GM18951 (cell line): ENCODE measurements at regions of chr6 and their contacts with region 1.

Region 1: GRCh38 chr6:82270881-82271645 is 23.5 kb upstream of the IBTK start:
- POLR2A ChIP-seq: no peak

Region 2: DNA sequence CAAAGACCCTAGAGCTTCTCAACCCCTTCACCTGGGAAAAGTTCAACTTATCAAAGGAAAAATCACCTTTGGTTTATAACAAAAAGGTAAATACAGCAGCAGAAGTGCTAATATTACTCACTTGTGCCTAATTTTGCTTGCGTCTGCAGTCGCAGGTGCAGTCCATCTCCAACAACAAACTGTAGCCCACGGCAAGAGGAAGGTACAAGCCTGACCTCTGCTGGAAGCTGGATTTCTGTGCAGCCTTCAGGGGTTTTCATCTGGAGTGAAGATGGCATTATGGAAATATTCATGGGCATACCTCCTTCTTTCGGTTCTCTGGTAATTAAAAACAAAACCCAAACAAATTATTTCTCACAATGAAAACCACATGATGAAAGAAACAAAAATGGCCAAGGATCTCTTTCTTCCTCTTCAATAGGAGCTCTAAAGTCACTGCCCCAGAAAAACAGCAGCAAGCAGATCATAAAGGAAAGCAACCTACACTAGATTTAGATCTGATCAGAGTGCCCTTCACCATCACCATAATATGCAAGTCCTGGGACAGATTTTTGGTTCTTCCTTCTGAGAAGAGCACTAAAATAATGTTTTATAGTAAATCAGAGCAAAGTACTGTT is 786.8 kb after region 1 on chr6:
- in situ Hi-C with region 1: loop called (anchors 10 kb)
- POLR2A ChIP-seq: no peak

Region 3: DNA sequence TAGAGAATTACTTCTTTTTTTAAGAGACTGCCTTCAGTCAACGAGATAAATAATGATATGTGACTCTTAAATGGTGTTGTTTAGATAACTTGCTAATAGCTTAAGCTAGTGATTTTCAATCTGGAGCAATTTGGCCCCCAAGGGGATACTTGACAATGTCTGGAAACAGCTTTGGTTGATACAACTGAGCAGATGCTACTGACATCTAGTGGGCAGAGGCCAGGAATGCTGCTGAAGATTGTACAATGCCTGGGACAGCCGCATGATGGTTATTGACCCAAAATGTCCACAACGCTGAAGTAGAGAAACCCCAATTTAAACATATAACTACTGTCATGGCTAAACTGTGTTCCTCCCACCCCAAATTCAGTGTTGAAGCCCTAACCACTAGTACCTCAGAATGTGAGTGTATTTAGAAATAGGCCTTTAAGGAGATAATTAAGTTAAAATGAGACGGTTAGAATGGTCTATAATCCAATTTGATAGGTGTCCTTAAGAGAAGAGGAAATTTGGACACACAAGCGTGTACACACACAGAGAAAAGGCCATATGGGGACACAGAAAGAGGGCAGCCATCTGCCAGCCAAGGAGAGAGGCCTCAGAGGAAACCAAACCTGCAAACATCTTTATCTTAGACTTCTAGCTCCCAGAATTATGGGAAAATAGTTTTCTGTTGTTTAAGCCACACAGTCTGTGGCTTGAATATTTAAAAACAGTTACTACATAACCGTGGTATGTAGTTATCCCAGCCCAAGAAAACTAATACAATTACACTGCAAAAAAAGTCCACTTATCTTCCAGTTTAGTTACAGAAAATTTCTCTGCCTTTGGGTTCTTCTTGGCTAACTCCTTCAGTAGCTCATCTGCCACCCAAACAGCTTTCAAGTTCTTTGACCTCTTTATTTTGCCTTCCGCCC is 944.3 kb after region 1 on chr6:
- in situ Hi-C with region 1: loop called (anchors 25 kb)
- POLR2A ChIP-seq: no peak